ENCODE measurements at regions of chr20 and their contacts with region 1.

Region 1: DNA sequence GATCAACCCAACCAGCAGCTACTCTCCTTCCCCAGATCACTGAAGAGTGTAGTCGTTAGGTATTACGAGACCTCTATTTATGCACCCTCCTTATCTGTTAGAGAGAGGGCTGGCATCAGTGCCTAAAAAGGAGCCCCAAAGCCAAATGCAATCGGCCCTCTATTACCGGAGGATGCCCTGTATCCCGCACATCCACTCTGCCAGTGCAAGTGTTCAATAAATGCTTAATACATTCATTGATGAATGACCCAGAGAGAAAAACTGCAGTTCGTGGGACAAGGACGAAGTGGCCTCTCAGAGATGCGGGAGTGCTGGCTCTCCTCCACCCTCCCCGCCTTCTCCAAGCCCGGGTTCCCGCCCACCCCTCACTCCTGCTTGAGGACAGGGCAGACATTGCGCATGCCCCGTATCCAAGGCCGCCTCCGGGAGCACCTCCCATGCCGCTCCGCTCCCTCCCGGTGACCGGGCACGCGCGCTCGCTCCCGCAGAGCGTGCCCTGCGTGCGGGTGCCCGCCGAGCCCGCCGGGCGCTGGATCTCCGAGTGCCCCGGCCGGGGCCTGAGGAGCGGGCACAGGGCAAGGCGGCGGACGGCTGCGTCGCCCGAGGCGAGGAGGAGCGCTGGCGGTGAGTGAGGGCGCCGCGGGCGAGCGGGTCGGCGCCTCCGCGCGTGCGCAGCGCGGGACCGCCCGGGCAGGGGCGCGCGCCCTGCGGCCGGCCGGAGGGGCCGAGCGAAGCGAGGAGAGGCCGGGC is 27.2 kb upstream of the BTBD3 start:
- DNase-seq: peak in 11 of 14 experiments; percentile 4 to 66 (median 39)
- ATAC-seq: peak; percentile 54
- H3K4me3 ChIP-seq: peak overlapping the region; percentile 48
- H3K4me3 Mint-ChIP-seq: peak overlapping the region; percentile 94
- H3K27ac ChIP-seq: no peak overlapping the region
- H3K27ac Mint-ChIP-seq: peak overlapping the region; percentile 29
- H3K4me1 ChIP-seq: no peaks in the 10 kb centered on the region
- H3K4me1 Mint-ChIP-seq: peaks cover 25% of the 10 kb centered on the region
- H3K27me3 ChIP-seq: peaks cover 3 to 6% of the 10 kb centered on the region in 2 experiments
- H3K27me3 Mint-ChIP-seq: peaks cover 16% of the 10 kb centered on the region
- CTCF ChIP-seq: no peak

Region 2: GRCh38 chr20:10034717-10035571 is 1855.6 kb before region 1 on chr20 and contains the start of gene ANKEF1:
- CTCF ChIA-PET with region 1: no interaction called
- POLR2A ChIA-PET with region 1: no interaction called
- intact Hi-C with region 1: loop called in 1 of 2 experiments (anchors 10 kb)
- DNase-seq: peak; percentile 61 to 92 (median 80)
- ATAC-seq: peak; percentile 98
- H3K4me3 ChIP-seq: peak within 1 kb of the TSS; percentile 62
- H3K4me3 Mint-ChIP-seq: peak within 1 kb of the TSS; percentile 84
- H3K27ac ChIP-seq: peak within 1 kb of the TSS in 1 of 2 donors; percentile 29
- H3K27ac Mint-ChIP-seq: peak within 1 kb of the TSS; percentile 80
- H3K4me1 ChIP-seq: peaks cover 13% of the 10 kb centered on the region
- H3K4me1 Mint-ChIP-seq: peaks cover 30% of the 10 kb centered on the region
- H3K27me3 ChIP-seq: no peaks in the 10 kb centered on the region
- H3K27me3 Mint-ChIP-seq: peaks cover 9% of the 10 kb centered on the region
- CTCF ChIP-seq: no peak
- total RNA-seq, gene ANKEF1: 1.3 TPM

Region 3: DNA sequence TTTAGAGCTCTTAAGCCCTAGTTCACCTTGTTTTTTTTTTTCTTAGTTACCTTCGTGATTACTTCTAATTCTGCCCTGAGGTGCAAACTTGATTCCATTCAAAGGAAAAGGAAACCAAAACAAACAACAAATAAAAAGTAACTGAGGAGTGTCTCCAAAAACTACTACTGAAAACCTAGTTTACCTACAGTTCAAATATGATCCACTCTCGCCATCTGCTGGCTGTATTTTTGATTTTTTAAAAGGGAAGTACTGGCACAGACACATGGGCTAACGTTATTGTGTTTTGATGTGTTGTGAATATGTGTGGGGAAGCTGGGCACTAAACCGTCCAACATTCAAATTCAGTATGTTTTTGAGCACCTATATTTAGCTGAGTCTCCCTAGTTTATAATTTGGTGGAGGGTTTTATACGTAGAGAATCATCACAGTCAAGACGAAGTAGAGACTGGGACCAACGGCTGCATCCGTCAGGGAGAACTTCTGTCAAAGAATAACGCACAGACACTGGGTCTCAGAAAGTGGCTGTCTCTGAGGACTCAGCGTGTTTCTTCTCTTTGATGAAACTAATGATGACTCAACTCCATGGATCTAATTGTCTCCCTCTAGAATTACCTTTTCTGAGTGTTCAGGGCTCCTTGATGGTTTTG is 346.4 kb before region 1 on chr20:
- CTCF ChIA-PET with region 1: no interaction called
- POLR2A ChIA-PET with region 1: no interaction called
- intact Hi-C with region 1: no loop called
- DNase-seq: peak in 3 of 14 experiments; percentile 15 to 24 (median 19)
- ATAC-seq: no peak
- H3K4me3 ChIP-seq: no peak overlapping the region
- H3K4me3 Mint-ChIP-seq: no peak overlapping the region
- H3K27ac ChIP-seq: no peak overlapping the region
- H3K27ac Mint-ChIP-seq: no peak overlapping the region
- H3K4me1 ChIP-seq: no peaks in the 10 kb centered on the region
- H3K4me1 Mint-ChIP-seq: no peaks in the 10 kb centered on the region
- H3K27me3 ChIP-seq: no peaks in the 10 kb centered on the region
- H3K27me3 Mint-ChIP-seq: no peaks in the 10 kb centered on the region
- CTCF ChIP-seq: no peak

Measured in CD4-positive, alpha-beta T cell (primary cell).